Posterior vena cava (tissue), 2 donors: ENCODE measurements at regions of chr1 and their contacts with region 1.

Region 1: DNA sequence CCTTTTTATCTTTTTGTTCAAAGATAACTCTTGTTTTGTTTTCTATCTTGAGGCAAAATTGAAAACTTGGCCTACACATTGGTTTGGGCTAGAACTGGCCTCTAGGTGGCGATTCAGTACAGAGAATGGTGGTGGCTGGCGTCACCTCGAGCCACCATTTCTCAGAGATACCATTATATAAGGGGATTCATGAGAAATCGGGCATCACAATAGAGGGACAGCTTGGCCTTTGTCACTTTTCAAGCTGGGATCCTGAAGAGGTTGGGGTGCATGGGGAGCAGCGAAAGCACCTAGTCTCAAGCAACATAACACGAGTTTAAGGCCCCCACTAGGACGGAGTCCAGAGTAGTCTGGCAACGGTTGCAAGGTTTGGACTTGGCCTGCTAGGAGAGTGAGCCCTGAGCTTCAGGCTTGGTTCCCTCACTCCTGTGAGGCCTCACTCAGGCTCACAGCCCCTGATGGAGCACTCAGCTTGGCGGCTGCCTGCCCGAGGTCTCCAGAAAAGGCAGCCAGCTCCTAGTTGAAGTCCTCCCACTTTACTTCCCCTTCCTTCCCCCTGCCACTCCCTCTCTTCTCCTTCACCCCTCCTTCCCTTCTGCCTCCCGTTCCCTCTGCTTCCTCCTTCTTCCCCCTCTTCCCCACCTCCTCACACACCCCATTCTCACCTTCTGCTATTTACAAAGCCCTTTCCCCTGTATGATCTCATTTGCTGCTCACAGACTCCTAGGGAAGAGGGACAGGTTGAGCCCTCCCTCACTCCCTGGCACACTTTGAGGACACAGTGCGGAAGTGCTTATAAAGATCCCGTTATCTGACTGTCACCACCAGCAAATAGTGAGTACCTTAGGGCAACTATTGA is 67.8 kb downstream of the LRIG2 start:
- DNase-seq: no peak

Region 2: GRCh38 chr1:113199760-113200455 is 59.1 kb after region 1 on chr1:
- intact Hi-C with region 1: no loop called
- DNase-seq: no peak

Region 3: GRCh38 chr1:113677250-113678158 is 536.7 kb after region 1 on chr1:
- intact Hi-C with region 1: loop called (anchors 5 to 10 kb)
- DNase-seq: no peak